GM12878 (cell line): ENCODE measurements at regions of chr7 and their contacts with region 1.

Region 1: GRCh38 chr7:41696314-41696916 is 6.5 kb downstream of the INHBA start:
- DNase-seq: no peak
- ATAC-seq: peak; percentile 62
- H3K4me3 ChIP-seq: no peak overlapping the region
- H3K27ac ChIP-seq: no peak overlapping the region
- H3K4me1 ChIP-seq: no peaks in the 10 kb centered on the region
- H3K27me3 ChIP-seq: 0 out of 4 replicates have a peak, but pooled peaks cover 0 to 2% of the 10 kb centered on the region in 2 experiments
- CTCF ChIP-seq: peak; percentile 53 to 66 (median 54)
- EP300 ChIP-seq: no peak
- POLR2A ChIP-seq: no peak
- RAD21 ChIP-seq: peak; percentile 66

Region 2: GRCh38 chr7:40833888-40834234 is 862.6 kb before region 1 on chr7:
- CTCF ChIA-PET with region 1: no interaction called
- POLR2A ChIA-PET with region 1: no interaction called
- RAD21 ChIA-PET with region 1: no interaction called
- SMC1A ChIA-PET with region 1: no interaction called
- in situ Hi-C with region 1: no loop called
- intact Hi-C with region 1: loop called (anchors 10 kb)
- DNase-seq: no peak
- ATAC-seq: peak; percentile 44; the same call in 1 of the 3 replicates
- H3K4me3 ChIP-seq: no peak overlapping the region
- H3K27ac ChIP-seq: no peak overlapping the region
- H3K4me1 ChIP-seq: no peaks in the 10 kb centered on the region
- H3K27me3 ChIP-seq: no peaks in the 10 kb centered on the region
- CTCF ChIP-seq: peak in 1 of 3 experiments; percentile 3; a peak in 1 of 6 replicates
- EP300 ChIP-seq: no peak
- POLR2A ChIP-seq: no peak
- RAD21 ChIP-seq: 0 out of 2 replicates have a peak, but pooled peaks have one; percentile 14

Region 3: DNA sequence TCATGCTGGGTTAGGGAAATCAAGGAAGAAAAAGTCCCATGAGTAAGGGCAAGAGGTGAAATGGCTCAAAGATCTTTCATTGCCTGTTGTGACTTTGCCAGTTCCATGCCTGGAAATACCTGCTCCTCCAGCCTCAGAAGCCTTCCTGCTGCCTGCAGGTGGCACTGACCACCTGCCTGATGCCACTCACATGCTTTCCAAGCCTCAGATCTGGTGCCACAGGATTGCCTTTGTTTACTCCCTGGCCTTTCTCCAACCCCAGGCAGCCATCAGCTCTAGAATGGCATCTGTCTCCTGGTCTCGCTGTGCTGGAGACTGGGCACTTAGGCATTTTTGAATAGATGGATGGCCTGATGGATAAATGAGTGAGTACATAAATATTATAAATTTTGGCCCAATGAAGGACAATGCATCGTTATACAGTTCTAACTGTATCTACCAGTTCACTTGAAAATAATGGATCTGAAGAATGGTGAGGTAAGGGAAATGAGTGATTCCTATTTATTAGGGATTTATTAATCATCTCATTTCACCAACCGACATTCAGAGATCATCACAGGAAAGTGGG is 650.8 kb before region 1 on chr7:
- CTCF ChIA-PET with region 1: interaction called, 14 read pairs
- POLR2A ChIA-PET with region 1: no interaction called
- RAD21 ChIA-PET with region 1: interaction called, 8 read pairs
- SMC1A ChIA-PET with region 1: interaction called, 8 read pairs
- in situ Hi-C with region 1: no loop called
- intact Hi-C with region 1: loop called (anchors 2 kb)
- DNase-seq: no peak
- ATAC-seq: peak; percentile 77
- H3K4me3 ChIP-seq: no peak overlapping the region
- H3K27ac ChIP-seq: no peak overlapping the region
- H3K4me1 ChIP-seq: no peaks in the 10 kb centered on the region
- H3K27me3 ChIP-seq: no peaks in the 10 kb centered on the region
- CTCF ChIP-seq: peak in 2 of 3 experiments; percentile 11 to 53; a peak in 3 of 6 replicates
- EP300 ChIP-seq: no peak
- POLR2A ChIP-seq: no peak
- RAD21 ChIP-seq: peak; percentile 73

Region 4: DNA sequence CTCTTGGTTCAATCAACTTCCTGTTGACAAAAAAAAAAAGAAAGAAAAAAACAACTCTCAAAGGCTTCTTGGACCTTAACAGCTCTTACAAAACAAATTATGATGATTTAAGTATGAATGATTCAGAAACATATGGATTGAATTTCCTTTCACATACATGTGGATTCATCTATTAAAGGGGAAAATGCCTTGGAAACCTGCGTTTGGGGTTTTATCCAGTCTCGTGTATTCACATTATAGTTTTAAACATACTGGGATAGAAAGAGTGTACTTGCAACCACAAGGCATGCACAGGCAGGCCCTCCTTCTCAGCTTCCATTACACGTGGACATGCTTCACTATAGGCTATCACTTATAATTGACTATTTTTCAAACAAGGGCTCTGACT is 280.2 kb before region 1 on chr7:
- CTCF ChIA-PET with region 1: interaction called, 3 read pairs
- POLR2A ChIA-PET with region 1: no interaction called
- RAD21 ChIA-PET with region 1: no interaction called
- SMC1A ChIA-PET with region 1: no interaction called
- in situ Hi-C with region 1: no loop called
- intact Hi-C with region 1: loop called (anchors 10 kb)
- DNase-seq: no peak
- ATAC-seq: no peak
- H3K4me3 ChIP-seq: no peak overlapping the region
- H3K27ac ChIP-seq: no peak overlapping the region
- H3K4me1 ChIP-seq: no peaks in the 10 kb centered on the region
- H3K27me3 ChIP-seq: no peaks in the 10 kb centered on the region
- CTCF ChIP-seq: no peak
- EP300 ChIP-seq: no peak
- POLR2A ChIP-seq: no peak
- RAD21 ChIP-seq: no peak

Region 5: GRCh38 chr7:41685684-41686083 is 10.7 kb before region 1 on chr7:
- CTCF ChIA-PET with region 1: interaction called, 7 read pairs
- POLR2A ChIA-PET with region 1: no interaction called
- RAD21 ChIA-PET with region 1: interaction called, 3 read pairs
- SMC1A ChIA-PET with region 1: interaction called, 10 read pairs
- in situ Hi-C with region 1: no loop called
- intact Hi-C with region 1: no loop called
- DNase-seq: no peak
- ATAC-seq: no peak; the same call in 2 of the 3 replicates
- H3K4me3 ChIP-seq: no peak overlapping the region
- H3K27ac ChIP-seq: no peak overlapping the region
- H3K4me1 ChIP-seq: no peaks in the 10 kb centered on the region
- H3K27me3 ChIP-seq: no peaks in the 10 kb centered on the region
- CTCF ChIP-seq: no peak
- EP300 ChIP-seq: no peak
- POLR2A ChIP-seq: no peak
- RAD21 ChIP-seq: no peak